Ascending aorta (tissue), 2 donors: ENCODE measurements at regions of chr5 and their contacts with region 1.

Region 1: GRCh38 chr5:54693936-54694657 is 176.5 kb downstream of the SNX18 start:
- DNase-seq: no peak
- H3K4me3 ChIP-seq: no peak overlapping the region
- H3K27ac ChIP-seq: peak overlapping the region; percentile 58 to 76
- H3K4me1 ChIP-seq: peaks cover 23 to 77% of the 10 kb centered on the region in 2 donors
- H3K27me3 ChIP-seq: no peaks in the 10 kb centered on the region
- CTCF ChIP-seq: no peak

Region 2: DNA sequence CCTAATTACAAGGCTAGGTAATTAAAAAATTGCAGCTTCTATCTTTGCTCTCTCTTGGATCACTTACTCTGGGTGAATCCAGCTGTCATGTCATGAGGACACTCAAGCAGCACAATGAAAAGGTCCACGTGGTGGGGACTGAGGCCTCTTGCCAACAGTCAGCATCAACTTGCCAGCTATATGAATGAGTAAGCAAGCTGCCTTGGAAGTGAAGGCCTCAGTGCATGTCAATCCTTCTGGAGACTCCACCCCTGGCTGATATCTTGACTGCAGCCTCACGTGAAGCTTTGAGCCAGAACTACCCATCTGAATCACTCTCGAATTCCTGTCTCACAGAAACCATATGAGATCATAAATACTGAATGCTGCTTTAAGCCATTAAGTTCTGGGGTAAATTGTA is 36.1 kb before region 1 on chr5:
- intact Hi-C with region 1: loop called (anchors 5 kb)
- DNase-seq: no peak
- H3K4me3 ChIP-seq: no peak overlapping the region
- H3K27ac ChIP-seq: peak overlapping the region; percentile 35 to 83
- H3K4me1 ChIP-seq: peaks cover 3 to 41% of the 10 kb centered on the region in 2 donors
- H3K27me3 ChIP-seq: no peaks in the 10 kb centered on the region
- CTCF ChIP-seq: no peak